ENCODE measurements at regions of chr13 and their contacts with region 1.

Region 1: DNA sequence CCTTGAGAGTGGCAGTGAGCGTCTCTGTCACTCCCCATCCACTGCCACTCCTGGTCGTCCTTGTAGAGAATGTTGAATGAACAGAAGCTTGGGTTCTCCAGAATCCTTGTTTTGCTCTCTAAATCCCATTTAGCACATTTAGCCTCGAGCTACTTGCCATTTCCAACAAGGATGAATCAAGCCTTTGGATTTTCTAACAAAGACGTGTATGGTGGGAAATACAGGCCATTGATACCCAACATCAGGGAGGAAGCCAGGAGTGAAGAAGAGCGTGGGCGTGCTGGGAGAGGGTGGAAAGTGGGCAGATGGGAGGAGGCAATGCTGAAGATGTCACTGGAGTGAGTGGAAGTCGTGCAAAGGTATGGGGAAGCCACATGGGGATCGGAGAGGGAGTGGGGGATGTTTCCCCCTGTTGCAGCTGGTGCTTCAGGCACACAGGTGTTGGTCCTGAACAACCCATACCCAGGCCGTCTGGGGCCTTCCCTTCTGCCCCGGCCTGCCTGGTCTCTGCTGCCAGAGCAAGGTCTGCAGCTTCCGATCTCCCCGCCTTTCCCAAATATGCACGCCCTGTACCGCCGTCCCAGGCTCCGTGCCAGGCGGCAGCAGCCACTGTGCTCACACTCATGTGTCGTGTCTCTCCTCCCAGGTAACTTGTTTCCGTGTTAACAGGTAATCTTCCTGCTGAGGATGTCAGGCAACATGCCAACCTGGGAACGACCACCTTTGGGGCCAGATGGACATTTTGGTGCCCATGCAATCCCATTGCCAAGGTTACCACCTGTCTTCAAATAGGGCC is 48.7 kb downstream of the ZIC5 start:
- DNase-seq: no peak
- ATAC-seq: no peak
- H3K4me3 ChIP-seq: no peak overlapping the region
- H3K27ac ChIP-seq: no peak overlapping the region
- H3K4me1 ChIP-seq: peaks cover 14% of the 10 kb centered on the region
- H3K27me3 ChIP-seq: no peaks in the 10 kb centered on the region
- CTCF ChIP-seq: no peak
- POLR2A ChIP-seq: no peak

Region 2: DNA sequence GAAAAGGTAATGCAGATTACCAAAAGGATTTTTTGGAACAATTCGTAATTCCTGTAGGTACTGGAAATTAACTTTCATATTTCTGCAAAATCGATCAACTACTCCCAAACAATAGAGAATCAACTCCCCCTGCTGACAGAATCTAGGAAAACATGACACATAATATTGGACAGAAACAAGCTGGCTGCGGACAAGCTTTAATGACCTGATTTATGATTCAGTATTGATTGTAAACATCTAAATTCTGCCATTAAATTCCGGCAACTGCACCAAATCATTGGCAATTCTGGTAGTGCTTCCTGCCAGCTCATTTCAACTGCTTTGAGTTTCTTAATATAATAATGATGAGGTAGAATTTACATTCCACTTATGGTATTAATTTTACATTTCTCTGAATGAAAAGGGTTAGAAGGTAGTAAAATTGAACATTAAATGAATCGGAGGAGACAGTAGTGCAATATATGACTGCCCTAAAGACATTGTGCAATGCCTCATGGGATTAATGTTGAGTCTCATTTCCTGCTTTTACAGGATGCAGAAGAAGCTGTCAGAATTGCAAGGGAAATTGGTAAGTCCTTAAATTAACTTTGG is 312.6 kb after region 1 on chr13:
- intact Hi-C with region 1: loop called (anchors 5 kb)
- DNase-seq: peak in 1 of 4 donors; percentile 41
- ATAC-seq: peak; percentile 64
- H3K4me3 ChIP-seq: no peak overlapping the region
- H3K27ac ChIP-seq: no peak overlapping the region
- H3K4me1 ChIP-seq: peaks cover 19% of the 10 kb centered on the region
- H3K27me3 ChIP-seq: no peaks in the 10 kb centered on the region
- CTCF ChIP-seq: peak; percentile 37 to 91 (median 81)
- POLR2A ChIP-seq: no peak